ENCODE measurements at regions of chr3 and their contacts with region 1.

Region 1: GRCh38 chr3:178465260-178466180 is 70.7 kb upstream of the KCNMB2 start:
- DNase-seq: no peak
- H3K4me3 ChIP-seq: no peak overlapping the region
- H3K27ac ChIP-seq: no peak overlapping the region
- H3K4me1 ChIP-seq: no peaks in the 10 kb centered on the region
- CTCF ChIP-seq: no peak

Region 2: GRCh38 chr3:177887475-177887874 is 578.0 kb before region 1 on chr3:
- CTCF ChIA-PET with region 1: no interaction called
- POLR2A ChIA-PET with region 1: no interaction called
- intact Hi-C with region 1: no loop called
- DNase-seq: no peak
- H3K4me3 ChIP-seq: no peak overlapping the region
- H3K27ac ChIP-seq: no peak overlapping the region
- H3K4me1 ChIP-seq: no peaks in the 10 kb centered on the region
- CTCF ChIP-seq: no peak

Region 3: GRCh38 chr3:178451799-178452198 is 13.7 kb before region 1 on chr3:
- CTCF ChIA-PET with region 1: no interaction called
- POLR2A ChIA-PET with region 1: interaction called, 14 read pairs
- intact Hi-C with region 1: no loop called
- DNase-seq: no peak
- H3K4me3 ChIP-seq: no peak overlapping the region
- H3K27ac ChIP-seq: no peak overlapping the region
- H3K4me1 ChIP-seq: no peaks in the 10 kb centered on the region
- CTCF ChIP-seq: no peak

Measured in OCI-LY7 (cell line).